Colonic mucosa (tissue), 4 donors: ENCODE measurements at regions of chr1 and their contacts with region 1.

Region 1: GRCh38 chr1:156383023-156383422 is 14.0 kb downstream of the RHBG start:
- DNase-seq: peak; percentile 49
- H3K4me3 ChIP-seq: no peak overlapping the region
- H3K27ac ChIP-seq: no peak overlapping the region
- H3K4me1 ChIP-seq: no peaks in the 10 kb centered on the region
- H3K27me3 ChIP-seq: peaks cover 9% of the 10 kb centered on the region
- CTCF ChIP-seq: peak; percentile 74

Region 2: DNA sequence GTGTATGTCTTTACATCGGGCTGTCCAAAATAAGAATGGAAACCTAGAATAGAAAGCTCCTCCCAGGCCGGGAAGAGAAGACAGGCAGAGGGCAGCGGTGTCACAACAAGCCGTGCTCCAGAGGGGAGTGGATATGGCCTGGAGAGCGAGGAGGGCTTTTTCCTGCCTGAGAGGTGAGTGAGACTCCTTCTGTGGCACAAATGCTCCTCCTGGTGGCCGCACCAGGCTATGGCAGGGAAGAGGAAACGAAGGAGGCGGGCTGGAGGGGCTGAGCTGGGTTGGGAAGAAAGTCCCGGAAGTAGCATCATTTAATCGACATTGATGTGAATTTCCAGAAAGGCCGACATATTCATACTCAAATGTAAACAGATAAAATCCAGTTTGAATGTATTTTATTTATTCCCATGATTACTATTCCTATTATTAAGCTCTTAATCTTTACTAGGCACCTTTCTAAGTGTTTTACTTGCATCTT is 62.8 kb after region 1 on chr1:
- intact Hi-C with region 1: loop called (anchors 2 kb)
- DNase-seq: peak; percentile 85
- H3K4me3 ChIP-seq: no peak overlapping the region
- H3K27ac ChIP-seq: no peak overlapping the region
- H3K4me1 ChIP-seq: no peaks in the 10 kb centered on the region
- H3K27me3 ChIP-seq: peaks cover 24% of the 10 kb centered on the region
- CTCF ChIP-seq: peak; percentile 92

Region 3: DNA sequence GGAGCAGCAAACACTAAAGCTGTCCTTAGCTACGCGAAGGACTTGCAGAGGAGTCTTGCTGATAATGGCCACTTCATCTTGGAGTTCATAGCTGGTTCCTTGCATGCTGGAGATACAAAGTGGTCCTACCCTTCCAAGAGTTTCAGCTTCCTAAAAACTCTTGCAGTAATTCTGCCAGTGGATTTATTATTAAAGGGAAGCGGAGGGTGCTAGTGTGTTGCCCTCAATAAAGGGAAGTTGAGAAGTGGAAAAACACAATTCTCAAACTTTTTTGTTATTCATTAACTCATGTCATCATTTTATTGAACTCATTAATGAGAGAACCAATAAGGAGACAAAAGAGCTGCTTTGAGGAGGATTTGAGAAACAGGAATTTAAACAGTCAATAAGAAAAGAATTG is 229.6 kb after region 1 on chr1:
- intact Hi-C with region 1: loop called (anchors 5 kb)
- DNase-seq: no peak
- H3K4me3 ChIP-seq: no peak overlapping the region
- H3K27ac ChIP-seq: no peak overlapping the region
- H3K4me1 ChIP-seq: no peaks in the 10 kb centered on the region
- H3K27me3 ChIP-seq: peaks cover 6% of the 10 kb centered on the region
- CTCF ChIP-seq: no peak